ENCODE measurements at regions of chr11 and their contacts with region 1.

Region 1: GRCh38 chr11:65540297-65541092 is 15.6 kb downstream of the SCYL1 start:
- DNase-seq: peak; percentile 90 to 91
- ATAC-seq: peak; percentile 69 to 88
- H3K4me3 ChIP-seq: peak overlapping the region; percentile 32
- H3K27ac ChIP-seq: peak overlapping the region; percentile 66 to 88
- H3K4me1 ChIP-seq: peaks cover 10% of the 10 kb centered on the region
- CTCF ChIP-seq: peak; percentile 82
- EP300 ChIP-seq: no peak; a peak in 1 of 5 replicates
- POLR2A ChIP-seq: peak; percentile 54
- RAD21 ChIP-seq: peak; percentile 82 to 86

Region 2: DNA sequence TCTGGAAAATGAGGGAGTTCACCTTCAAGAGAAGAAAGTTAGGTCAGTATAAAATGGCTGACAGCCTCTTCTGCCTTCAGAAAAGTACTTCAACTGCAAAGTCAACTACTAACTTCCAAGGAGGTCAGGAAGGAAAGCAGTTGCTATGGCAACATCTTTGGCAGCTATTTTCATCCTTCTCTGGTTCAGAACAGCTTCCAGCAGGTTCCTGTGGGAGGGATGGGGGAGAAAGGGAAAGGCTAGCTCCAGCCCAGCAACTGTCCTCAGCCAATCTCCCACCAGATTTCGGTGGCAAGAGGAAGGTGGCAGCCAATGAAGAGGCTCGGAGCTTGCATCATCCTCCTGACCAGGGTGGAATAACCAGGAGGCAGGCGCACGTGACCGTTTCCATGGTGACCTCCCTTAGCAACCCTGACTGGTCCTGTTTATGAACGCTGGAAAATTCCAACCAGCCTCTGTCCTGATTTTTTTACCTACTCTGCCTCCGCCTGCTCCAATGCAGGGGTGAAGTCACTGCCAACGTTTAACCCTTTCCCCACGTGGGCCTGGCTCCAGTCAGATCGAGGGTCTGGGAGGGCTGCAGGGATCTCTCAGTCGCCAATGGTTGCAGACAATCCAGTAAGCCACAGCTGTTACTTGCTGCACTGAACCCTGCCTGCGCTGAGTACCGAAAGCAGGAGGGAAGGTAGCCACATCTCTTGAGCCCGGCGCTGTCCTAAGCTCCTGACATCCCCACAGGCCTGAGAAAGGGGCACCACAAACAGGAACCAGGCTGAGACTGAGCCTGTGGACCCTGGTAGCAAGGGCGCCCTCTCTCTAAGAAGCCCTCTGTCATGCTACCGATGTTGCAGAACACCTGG is 52.9 kb before region 1 on chr11:
- CTCF ChIA-PET with region 1: no interaction called
- POLR2A ChIA-PET with region 1: no interaction called
- DNase-seq: peak; percentile 99 to 100
- ATAC-seq: peak; percentile 75 to 83
- H3K4me3 ChIP-seq: 0 out of 3 replicates have a peak overlapping the region, but pooled peaks have one; percentile 3
- H3K27ac ChIP-seq: peak overlapping the region; percentile 99 to 100
- H3K4me1 ChIP-seq: peaks cover 82% of the 10 kb centered on the region
- CTCF ChIP-seq: no peak
- EP300 ChIP-seq: peak in 1 of 2 experiments; percentile 51; a peak in 2 of 5 replicates
- POLR2A ChIP-seq: no peak
- RAD21 ChIP-seq: no peak; a peak in 1 of 5 replicates

Region 3: DNA sequence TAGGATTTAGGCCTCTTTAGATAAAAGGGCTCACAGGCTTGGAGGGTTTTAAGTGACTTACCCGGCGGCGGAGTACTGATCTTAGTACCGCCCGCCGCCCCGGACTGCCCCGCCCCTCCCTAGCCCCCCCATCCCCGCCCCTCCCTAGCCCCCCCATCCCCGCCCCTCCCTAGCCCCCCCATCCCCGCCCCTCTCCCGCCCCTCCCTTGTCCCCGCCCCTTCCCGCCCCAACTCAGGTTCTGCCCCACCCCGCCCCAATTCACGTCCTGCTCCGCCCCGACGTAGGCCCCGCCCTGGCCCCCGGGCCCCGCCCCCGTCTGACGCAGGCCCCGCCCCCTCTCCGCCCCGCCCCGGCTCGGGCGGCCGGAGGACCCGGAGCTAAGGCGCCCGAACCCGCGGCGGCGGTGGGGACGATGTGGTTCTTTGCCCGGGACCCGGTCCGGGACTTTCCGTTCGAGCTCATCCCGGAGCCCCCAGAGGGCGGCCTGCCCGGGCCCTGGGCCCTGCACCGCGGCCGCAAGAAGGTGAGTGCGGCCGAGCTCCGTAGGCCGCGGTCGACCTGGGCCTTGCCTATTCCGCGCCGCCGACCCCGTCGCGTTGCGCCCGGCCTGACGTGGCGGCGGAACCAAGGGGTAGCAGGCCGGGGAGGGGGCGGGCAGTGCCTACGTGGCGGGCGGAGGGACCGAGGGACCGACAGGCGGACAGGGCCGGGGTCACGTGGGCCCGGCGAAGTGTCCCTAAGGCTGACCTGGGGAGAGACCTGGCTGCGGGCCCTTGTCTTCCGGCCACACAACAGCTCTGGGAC is 15.6 kb before region 1 on chr11 and contains the start of gene SCYL1:
- CTCF ChIA-PET with region 1: interaction called, 66 read pairs
- POLR2A ChIA-PET with region 1: no interaction called
- DNase-seq: peak; percentile 53 to 81
- ATAC-seq: peak; percentile 77 to 80
- H3K4me3 ChIP-seq: peak within 1 kb of the TSS; percentile 94
- H3K27ac ChIP-seq: peak within 1 kb of the TSS; percentile 90 to 99
- H3K4me1 ChIP-seq: peaks cover 18% of the 10 kb centered on the region
- CTCF ChIP-seq: no peak
- EP300 ChIP-seq: no peak
- POLR2A ChIP-seq: peak; percentile 44; the same call in 1 of the 2 replicates
- RAD21 ChIP-seq: no peak
- polyA plus RNA-seq, gene SCYL1: 30.8 and 33.6 TPM in 2 replicates

Region 4: DNA sequence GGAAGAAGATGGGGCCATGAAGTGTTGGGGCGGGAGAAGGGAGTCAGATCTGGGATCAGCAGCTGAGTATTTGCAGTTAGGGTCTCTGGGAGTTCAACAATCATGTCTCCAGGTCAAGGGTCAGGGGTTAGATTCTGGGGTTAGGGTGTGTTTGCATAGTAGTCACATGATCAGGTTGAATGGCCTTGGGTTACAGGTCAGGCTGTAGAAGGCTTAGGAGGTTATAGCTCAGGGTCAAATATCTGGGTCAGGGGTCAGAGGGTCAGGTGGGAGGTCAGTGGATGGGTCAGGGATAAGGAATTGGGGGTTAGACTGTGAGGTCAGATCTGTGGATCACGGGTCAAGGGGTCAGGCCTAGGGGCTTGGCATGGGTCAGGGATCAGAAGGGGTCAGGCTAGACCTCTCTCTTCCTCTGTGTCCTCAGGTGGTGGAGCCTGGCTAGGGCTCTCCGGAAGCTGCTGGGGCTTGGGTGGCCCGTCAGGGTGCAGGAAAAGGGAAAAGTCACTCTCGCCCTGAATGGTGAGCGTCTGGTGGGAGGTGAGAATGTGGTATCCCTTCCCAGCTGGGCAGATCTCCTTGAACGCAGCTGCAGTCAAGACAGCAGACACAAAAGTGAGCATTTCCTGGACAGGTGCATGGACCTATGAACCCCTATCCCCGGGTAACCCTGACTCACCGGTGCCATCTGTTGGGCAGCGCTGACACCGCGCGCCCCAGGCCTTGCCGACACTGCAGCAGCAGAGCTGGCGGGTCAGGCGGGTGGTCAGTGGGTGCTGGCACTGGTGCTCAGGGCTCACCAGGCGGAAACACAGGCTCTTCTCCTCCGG is 11.3 kb after region 1 on chr11:
- CTCF ChIA-PET with region 1: interaction called, 148 read pairs
- POLR2A ChIA-PET with region 1: interaction called, 6 read pairs
- DNase-seq: peak; percentile 58 to 81
- ATAC-seq: peak; percentile 57 to 72; a peak in 5 of 6 replicates
- H3K4me3 ChIP-seq: no peak overlapping the region
- H3K27ac ChIP-seq: no peak overlapping the region; a peak in 1 of 6 replicates
- H3K4me1 ChIP-seq: peaks cover 50% of the 10 kb centered on the region
- CTCF ChIP-seq: peak; percentile 54
- EP300 ChIP-seq: no peak
- POLR2A ChIP-seq: no peak
- RAD21 ChIP-seq: peak; percentile 42 to 52; a peak in 4 of 5 replicates

Region 5: DNA sequence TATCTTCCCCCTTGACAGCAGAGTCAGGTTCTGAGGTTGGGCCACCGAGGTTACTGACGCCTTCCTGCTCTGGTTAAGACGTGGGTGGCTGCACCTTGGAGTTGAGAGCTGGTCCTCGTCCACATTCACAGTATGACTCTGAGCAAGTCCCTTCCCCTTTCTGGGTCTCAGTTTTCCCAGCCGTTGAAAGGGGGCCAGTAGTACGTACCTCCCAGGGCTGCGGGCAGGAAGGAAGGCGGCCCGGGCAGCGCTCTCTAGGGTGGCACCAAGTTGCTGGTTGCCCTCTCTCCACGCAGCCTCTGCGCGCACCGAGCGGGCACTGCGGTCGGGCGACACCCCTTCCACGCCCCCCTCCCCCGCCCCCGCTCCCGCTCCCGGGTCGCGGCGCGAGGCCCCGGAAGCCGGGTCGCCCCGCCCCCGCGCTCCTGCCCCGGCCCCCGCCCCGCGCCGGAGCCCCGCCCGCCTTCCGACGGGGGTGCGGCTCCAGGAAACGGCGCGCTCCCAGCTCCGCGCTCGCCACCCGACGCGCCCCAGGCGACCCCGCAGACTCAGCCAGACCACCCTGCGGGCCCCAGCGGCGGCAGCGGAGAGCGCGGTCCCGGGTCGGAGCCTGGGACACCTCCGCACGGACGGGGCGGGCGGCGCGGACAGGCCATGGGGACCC is 35.2 kb after region 1 on chr11 and contains the start of gene EHBP1L1:
- CTCF ChIA-PET with region 1: interaction called, 393 read pairs
- POLR2A ChIA-PET with region 1: interaction called, 23 read pairs
- DNase-seq: peak; percentile 64 to 68
- ATAC-seq: peak; percentile 9 to 11
- H3K4me3 ChIP-seq: peak within 1 kb of the TSS; percentile 82
- H3K27ac ChIP-seq: peak within 1 kb of the TSS; percentile 92 to 98
- H3K4me1 ChIP-seq: peaks cover 57% of the 10 kb centered on the region
- CTCF ChIP-seq: no peak
- EP300 ChIP-seq: no peak
- POLR2A ChIP-seq: no peak; the same call in 1 of the 2 replicates
- RAD21 ChIP-seq: no peak
- polyA plus RNA-seq, gene EHBP1L1: 11.6 and 13.8 TPM in 2 replicates

Region 6: DNA sequence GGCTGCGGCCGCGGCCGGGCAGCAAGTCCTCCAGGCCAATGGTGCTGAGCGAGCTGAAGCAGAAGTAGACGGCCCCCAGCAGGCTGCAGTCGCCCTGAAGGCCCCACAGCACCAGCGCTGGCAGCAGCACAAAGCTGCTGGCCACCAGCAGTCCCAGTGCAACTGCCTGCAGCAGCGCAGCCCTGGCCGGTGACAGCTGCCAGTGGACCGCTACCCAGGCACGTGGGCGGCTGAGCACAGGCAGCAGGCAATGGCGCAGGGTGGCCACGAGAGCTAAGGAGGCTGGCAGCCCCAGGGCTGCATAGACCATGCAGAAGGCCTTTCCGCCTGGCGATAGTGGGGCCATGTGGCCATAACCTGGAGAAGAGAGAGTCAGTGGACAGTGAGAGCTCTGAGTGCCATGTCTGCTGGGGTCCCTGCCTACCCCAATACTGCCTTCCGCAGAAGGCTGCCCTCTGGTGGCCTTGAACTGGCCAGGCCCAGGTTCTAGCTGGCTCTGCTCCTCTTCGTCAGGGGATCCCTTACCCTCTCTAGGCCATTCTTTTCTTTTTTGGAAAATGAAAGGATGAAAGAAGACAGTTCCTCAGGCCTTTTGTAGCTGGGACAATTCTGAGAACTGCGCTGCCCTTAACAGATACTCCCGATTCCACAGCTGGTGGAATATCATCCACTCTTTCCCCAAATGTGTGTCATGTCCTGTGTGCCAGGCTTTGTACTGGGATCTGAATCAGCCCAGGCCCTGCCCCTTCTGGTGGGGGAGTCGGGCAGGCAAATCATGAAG is 53.2 kb after region 1 on chr11:
- CTCF ChIA-PET with region 1: interaction called, 41 read pairs
- POLR2A ChIA-PET with region 1: interaction called, 3 read pairs
- DNase-seq: no peak
- ATAC-seq: peak; percentile 42 to 73; a peak in 4 of 6 replicates
- H3K4me3 ChIP-seq: no peak overlapping the region
- H3K27ac ChIP-seq: no peak overlapping the region
- H3K4me1 ChIP-seq: no peaks in the 10 kb centered on the region; the same call in 2 of the 3 replicates
- CTCF ChIP-seq: peak; percentile 66
- EP300 ChIP-seq: no peak
- POLR2A ChIP-seq: no peak
- RAD21 ChIP-seq: peak; percentile 34 to 43; a peak in 3 of 5 replicates

Region 7: DNA sequence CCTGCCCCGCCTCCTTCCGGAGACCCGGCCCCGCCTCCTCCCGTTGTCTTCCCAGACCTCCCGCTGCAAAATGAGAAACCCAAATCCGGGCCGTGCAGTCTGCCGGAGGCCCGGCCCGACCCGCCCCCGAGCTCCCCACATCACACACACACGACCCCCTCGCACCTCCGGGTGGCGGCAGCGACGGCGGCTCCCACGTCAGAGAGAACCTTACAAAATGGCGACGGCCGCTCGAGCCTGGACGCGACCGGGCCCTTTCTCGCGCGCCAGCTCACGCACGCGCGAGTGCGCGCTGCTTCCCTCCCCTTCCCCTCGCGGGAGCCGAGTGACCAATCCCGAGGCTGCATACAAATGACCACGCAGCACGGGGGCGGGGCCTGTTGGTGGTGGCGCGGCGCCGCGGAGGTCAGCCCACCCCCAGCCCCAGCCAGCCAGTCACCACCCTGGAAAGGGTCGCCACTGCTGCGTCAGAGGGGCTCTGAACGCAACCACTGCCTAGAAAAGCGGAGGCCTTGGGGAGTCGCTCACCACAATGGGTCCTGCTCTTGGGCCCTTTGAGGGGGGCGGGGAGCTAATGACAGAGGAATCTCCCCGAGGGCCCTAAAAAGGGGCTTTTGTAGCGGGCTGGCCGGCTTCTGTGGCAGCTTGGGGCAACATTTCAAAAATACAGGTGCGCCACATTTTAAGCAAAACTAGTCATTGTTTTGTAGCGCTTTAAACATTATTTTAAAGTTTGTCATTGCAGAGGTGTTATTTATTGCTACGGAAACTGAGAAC is 1137.3 kb after region 1 on chr11 and contains the start of gene RBM4B:
- CTCF ChIA-PET with region 1: no interaction called
- POLR2A ChIA-PET with region 1: no interaction called
- DNase-seq: peak; percentile 96 to 97
- ATAC-seq: peak; percentile 96
- H3K4me3 ChIP-seq: peak within 1 kb of the TSS; percentile 72
- H3K27ac ChIP-seq: peak within 1 kb of the TSS; percentile 94 to 98
- H3K4me1 ChIP-seq: peaks cover 26% of the 10 kb centered on the region
- CTCF ChIP-seq: no peak
- EP300 ChIP-seq: no peak
- POLR2A ChIP-seq: peak; percentile 66
- RAD21 ChIP-seq: no peak
- polyA plus RNA-seq, gene RBM4B: 30.1 and 32.7 TPM in 2 replicates

Measured in A549 (cell line).